Ascending aorta (tissue), 2 donors: ENCODE measurements at regions of chr2 and their contacts with region 1.

Region 1: GRCh38 chr2:25376750-25377621 is 35.3 kb upstream of the DNMT3A start:
- DNase-seq: peak; percentile 57 to 92
- H3K4me3 ChIP-seq: peak overlapping the region; percentile 9 to 52
- H3K27ac ChIP-seq: peak overlapping the region in 1 of 2 donors; percentile 24
- H3K4me1 ChIP-seq: peaks cover 4 to 9% of the 10 kb centered on the region in 2 donors
- H3K27me3 ChIP-seq: no peaks in the 10 kb centered on the region
- CTCF ChIP-seq: peak; percentile 76 to 88 (median 87)

Region 2: DNA sequence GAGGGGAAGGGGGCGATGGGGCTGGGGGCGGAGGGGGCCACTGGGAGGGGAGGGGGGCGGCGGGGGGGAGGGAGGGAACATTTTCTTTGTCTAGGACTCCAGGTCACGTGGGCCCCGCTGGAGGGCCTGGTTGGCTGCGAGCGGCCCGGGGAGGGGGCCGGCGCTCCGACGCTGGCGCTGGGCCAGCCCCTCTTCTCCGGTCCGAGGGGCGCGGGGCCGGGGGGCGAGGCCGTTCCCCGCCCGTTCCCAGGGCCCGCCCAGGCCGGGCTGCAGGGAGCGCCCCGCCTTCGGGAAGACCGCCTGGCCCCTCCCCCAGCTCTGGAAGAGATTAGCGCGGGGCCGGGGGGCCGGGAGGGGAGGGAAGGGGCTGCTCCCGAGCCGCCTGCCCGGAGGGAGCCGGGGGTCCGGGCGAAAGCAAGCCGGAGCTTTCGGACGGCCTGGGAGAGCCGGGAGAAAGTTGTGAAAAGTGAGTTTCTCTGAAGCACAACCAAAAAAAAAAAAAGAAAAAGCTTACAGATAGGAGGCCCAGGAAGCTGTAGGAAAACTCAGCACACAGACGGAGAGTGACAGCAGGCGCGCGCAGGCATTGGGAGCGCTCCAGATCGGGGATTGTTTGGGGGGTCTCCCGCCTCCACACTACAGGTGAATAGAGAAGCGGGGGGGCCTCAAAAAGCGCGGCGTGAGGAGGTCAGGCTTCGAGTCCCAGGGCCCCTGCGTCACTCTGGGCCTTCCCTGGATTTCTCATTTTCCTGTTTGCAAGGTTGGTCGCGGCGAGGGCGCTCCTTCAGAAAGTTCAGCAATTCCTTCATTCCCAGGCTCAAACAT is 124.5 kb before region 1 on chr2:
- intact Hi-C with region 1: loop called (anchors 2 kb)
- DNase-seq: peak in 1 of 2 donors; percentile 71
- H3K4me3 ChIP-seq: peak overlapping the region; percentile 73 to 75
- H3K27ac ChIP-seq: peak overlapping the region; percentile 67 to 77
- H3K4me1 ChIP-seq: peaks cover 6 to 21% of the 10 kb centered on the region in 2 donors
- H3K27me3 ChIP-seq: no peaks in the 10 kb centered on the region
- CTCF ChIP-seq: no peak

Region 3: DNA sequence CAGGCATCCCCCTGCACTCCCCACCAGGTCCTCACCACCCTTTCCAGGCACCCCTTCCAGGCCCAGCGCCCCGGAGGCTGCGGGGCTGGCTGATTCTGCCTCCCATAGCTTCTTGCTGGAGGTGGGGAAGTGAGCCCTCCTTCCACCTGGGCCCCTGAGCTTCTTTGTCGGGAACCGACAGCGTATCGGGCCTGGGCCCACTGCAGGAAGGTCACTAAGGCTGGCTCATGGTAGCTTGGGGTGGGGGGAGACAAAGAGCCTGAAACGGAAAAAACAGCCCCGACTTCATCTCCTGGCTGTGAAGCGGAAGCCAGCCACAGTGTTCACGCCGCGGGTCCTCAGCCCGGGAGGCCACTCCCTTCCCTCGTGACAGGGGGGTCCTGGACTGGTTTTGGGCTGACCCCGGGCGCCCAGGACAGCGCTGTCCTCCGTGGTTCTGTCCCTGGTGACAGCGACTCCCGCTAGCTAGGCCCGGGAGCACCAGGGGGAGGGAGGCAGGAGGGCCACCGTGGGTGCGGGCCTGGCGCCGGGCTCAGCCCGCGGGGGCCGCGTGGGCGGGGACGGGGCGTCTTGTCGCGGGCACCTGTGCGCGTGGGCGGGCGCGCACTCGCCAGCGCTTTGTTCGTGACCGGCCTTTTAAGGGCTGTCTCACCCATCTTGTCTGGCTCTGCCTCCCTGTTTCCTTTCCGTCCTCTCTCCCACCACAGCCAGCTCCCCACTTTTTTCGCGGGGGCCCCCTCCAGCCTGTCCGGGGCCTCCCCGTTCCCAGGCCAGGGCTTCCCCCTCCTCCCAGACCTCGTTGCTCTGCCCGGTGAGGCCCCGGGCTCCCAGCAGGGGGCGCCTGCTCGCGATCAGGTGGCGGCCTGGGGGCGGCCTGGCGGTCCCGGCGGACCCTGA is 100.2 kb before region 1 on chr2:
- intact Hi-C with region 1: loop called (anchors 1 kb)
- DNase-seq: peak in 1 of 2 donors; percentile 84
- H3K4me3 ChIP-seq: peak overlapping the region; percentile 47 to 58
- H3K27ac ChIP-seq: peak overlapping the region; percentile 70 to 84
- H3K4me1 ChIP-seq: peaks cover 0 to 10% of the 10 kb centered on the region in 2 donors
- H3K27me3 ChIP-seq: no peaks in the 10 kb centered on the region
- CTCF ChIP-seq: peak; percentile 77 to 93 (median 85)

Region 4: DNA sequence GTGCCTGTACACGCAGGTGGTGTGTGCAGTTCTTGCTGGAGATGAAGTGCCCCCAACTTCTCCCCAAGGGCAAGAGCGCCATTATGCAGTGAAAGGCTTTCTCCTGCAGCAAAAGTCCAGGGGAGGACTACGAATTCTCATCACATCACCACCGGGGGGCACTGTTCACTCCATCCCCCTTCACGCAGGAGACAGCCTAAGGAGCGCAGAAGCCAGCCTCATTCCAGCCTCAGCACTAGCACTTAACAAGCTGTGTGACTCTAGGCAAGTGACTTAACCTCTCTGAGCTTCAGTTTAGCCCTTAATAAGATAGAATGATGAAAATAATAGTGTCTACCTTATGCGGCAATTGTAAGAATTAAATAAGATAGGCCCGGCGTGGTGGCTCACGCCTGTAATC is 67.6 kb before region 1 on chr2:
- intact Hi-C with region 1: loop called (anchors 5 kb)
- DNase-seq: no peak
- H3K4me3 ChIP-seq: no peak overlapping the region
- H3K27ac ChIP-seq: no peak overlapping the region
- H3K4me1 ChIP-seq: peaks cover 12 to 46% of the 10 kb centered on the region in 2 donors
- H3K27me3 ChIP-seq: no peaks in the 10 kb centered on the region
- CTCF ChIP-seq: peak; percentile 30 to 43 (median 31)

Region 5: GRCh38 chr2:25362049-25362433 is 14.9 kb before region 1 on chr2:
- intact Hi-C with region 1: loop called (anchors 1 kb)
- DNase-seq: peak; percentile 82 to 96
- H3K4me3 ChIP-seq: peak overlapping the region; percentile 43 to 59
- H3K27ac ChIP-seq: peak overlapping the region; percentile 4 to 34
- H3K4me1 ChIP-seq: no peaks in the 10 kb centered on the region
- H3K27me3 ChIP-seq: no peaks in the 10 kb centered on the region
- CTCF ChIP-seq: peak; percentile 89 to 98 (median 97)